ENCODE measurements at regions of chr16 and their contacts with region 1.

Region 1: DNA sequence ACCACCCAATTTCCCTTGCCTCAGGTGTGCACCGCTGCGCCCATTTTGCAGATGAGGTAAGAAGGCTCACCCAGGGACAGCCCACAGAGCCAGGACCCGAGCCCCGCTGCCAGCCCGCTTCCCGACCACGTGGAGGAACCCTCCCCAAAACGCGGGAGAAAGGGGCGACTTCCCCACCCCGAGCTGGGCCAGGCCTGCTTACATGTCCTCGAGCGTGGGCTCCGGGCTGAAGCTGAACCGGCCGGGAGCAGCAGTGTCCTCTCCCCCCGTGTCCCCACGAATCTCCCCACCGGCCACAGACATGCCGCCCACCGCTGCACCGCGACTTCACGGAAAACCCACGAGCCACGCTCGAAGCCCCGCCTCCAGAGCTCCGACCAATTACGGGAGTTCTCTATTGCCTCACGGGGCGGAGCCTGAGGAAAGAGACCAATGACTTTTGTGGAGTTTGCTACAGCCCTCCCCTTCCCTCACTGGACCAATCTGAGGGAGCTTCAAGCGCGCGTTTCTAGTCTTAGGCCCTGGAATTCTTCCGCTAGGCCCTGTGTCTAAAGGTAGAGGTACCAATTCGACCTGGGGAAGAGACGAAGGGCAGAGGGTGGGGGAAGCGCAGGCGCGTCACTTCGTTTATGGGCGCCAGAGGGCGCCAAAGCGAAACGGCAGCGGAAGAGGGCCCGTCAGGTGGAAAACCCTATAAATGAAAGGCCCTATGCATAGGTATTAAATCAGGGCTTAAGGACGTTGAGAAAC is at the start of gene DCTPP1:
- DNase-seq: peak; percentile 99
- ATAC-seq: peak; percentile 99
- H3K4me3 ChIP-seq: peak within 1 kb of the TSS; percentile 86 to 99
- H3K27ac ChIP-seq: peak within 1 kb of the TSS; percentile 91
- H3K4me1 ChIP-seq: peaks cover 9% of the 10 kb centered on the region
- H3K27me3 ChIP-seq: no peaks in the 10 kb centered on the region
- CTCF ChIP-seq: peak; percentile 95
- total RNA-seq, gene DCTPP1: 120 TPM

Region 2: DNA sequence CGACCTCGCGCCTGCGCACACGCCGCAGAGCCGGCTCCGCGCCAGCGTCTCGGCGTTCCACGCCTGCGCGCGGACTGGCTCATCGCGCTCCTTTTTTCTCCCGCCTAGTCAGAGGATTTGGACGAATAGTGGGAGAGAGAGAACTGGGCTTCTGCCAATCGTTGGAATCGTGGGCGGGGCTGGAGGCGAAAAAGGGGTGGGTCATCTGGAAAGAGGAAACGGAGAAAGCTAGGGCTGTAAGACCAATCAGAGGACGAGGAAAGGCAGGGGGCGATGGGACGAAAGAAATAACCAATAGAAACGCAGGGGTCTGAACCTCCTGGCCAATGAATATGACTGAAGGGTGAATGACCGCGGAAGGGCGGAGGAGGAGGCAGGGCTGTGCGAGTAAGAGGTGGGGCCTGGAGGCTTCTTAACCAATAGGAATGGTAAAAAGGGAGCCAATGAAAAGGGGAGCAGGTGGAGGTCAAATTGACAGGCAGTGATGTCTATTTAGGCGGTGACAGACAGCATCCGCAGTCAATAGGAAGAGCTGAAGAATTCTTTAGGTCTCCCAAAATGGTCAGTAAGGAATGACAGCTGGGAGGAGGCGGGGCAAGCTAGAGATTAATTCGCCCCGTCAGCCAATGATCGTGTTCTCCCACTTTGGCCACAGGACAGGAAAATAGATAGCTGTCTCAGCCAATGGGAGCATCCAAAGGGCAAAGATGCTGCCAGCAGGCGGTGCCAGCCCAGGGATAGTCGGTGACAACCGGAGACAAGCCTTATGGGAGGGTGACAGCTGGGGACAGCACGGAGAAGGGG is 59.2 kb before region 1 on chr16 and contains the start of gene TBC1D10B:
- CTCF ChIA-PET with region 1: no interaction called
- POLR2A ChIA-PET with region 1: interaction called, 14 read pairs
- in situ Hi-C with region 1: no loop called
- intact Hi-C with region 1: no loop called
- DNase-seq: peak; percentile 100
- ATAC-seq: peak; percentile 93
- H3K4me3 ChIP-seq: peak within 1 kb of the TSS; percentile 80 to 85
- H3K27ac ChIP-seq: peak within 1 kb of the TSS; percentile 84
- H3K4me1 ChIP-seq: 0 out of 2 replicates have a peak, but pooled peaks cover 7% of the 10 kb centered on the region
- H3K27me3 ChIP-seq: no peaks in the 10 kb centered on the region
- CTCF ChIP-seq: no peak
- total RNA-seq, gene TBC1D10B: 52.6 TPM

Region 3: GRCh38 chr16:30417529-30418349 is 12.1 kb before region 1 on chr16:
- CTCF ChIA-PET with region 1: interaction called, 12 read pairs
- POLR2A ChIA-PET with region 1: interaction called, 3 read pairs
- in situ Hi-C with region 1: no loop called
- intact Hi-C with region 1: no loop called
- DNase-seq: peak; percentile 81
- ATAC-seq: peak; percentile 94
- H3K4me3 ChIP-seq: peak overlapping the region; percentile 45 to 55
- H3K27ac ChIP-seq: peak overlapping the region; percentile 77
- H3K4me1 ChIP-seq: peaks cover 13% of the 10 kb centered on the region
- H3K27me3 ChIP-seq: no peaks in the 10 kb centered on the region
- CTCF ChIP-seq: no peak

Region 4: DNA sequence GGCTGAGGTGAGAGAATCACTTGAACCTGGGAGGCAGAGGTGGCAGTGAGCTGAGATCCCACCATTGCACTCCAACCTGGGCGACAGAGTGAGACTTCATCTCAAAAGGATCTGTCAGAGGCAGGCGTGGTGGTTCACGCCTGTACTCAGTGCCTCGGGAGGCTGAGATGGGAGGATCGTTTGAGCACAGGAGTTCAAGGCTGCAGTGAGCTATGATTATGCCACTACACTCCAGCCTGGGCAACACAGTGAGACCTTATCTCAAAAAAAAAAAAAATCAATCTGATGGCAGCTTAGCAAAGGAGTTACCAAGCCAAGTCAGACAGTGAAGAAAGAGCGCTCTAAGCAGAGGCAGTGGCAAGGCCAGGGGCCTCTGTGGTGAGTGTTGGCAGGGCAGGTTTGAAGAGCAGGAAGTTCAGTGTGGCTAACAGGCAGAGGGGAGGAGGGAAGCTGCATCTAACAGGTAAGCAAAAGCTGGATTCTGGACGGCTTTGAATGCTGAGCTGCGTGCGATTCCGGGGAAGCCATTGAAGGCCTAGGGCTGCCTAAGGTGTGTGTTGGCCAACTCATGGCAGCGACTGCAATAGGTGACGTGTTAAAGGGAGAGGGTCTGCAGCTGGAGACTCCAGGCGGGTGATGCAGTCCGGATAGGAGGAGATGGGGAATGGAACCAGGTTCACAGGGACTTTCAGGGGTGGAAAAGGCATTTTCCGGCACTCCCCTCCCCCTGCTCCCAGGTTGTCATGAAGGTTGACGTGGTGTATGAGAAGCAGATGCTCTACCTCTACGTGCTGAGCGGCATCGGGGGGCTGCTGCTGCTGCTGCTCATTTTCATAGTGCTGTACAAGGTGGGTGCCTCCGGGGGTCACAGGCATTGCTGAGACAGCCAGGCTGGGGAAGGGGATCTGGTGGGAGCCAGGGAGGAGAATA is 89.5 kb after region 1 on chr16:
- CTCF ChIA-PET with region 1: no interaction called
- POLR2A ChIA-PET with region 1: interaction called, 10 read pairs
- in situ Hi-C with region 1: no loop called
- intact Hi-C with region 1: no loop called
- DNase-seq: no peak
- ATAC-seq: no peak
- H3K4me3 ChIP-seq: no peak overlapping the region
- H3K27ac ChIP-seq: no peak overlapping the region
- H3K4me1 ChIP-seq: peaks cover 1% of the 10 kb centered on the region; the same call in 1 of the 2 replicates
- H3K27me3 ChIP-seq: no peaks in the 10 kb centered on the region
- CTCF ChIP-seq: no peak

Region 5: GRCh38 chr16:30602616-30603277 is 172.9 kb after region 1 on chr16:
- CTCF ChIA-PET with region 1: interaction called, 14 read pairs
- POLR2A ChIA-PET with region 1: no interaction called
- in situ Hi-C with region 1: no loop called
- intact Hi-C with region 1: no loop called
- DNase-seq: no peak
- ATAC-seq: no peak
- H3K4me3 ChIP-seq: no peak overlapping the region
- H3K27ac ChIP-seq: no peak overlapping the region
- H3K4me1 ChIP-seq: peaks cover 3% of the 10 kb centered on the region; the same call in 1 of the 2 replicates
- H3K27me3 ChIP-seq: no peaks in the 10 kb centered on the region
- CTCF ChIP-seq: no peak

Region 6: DNA sequence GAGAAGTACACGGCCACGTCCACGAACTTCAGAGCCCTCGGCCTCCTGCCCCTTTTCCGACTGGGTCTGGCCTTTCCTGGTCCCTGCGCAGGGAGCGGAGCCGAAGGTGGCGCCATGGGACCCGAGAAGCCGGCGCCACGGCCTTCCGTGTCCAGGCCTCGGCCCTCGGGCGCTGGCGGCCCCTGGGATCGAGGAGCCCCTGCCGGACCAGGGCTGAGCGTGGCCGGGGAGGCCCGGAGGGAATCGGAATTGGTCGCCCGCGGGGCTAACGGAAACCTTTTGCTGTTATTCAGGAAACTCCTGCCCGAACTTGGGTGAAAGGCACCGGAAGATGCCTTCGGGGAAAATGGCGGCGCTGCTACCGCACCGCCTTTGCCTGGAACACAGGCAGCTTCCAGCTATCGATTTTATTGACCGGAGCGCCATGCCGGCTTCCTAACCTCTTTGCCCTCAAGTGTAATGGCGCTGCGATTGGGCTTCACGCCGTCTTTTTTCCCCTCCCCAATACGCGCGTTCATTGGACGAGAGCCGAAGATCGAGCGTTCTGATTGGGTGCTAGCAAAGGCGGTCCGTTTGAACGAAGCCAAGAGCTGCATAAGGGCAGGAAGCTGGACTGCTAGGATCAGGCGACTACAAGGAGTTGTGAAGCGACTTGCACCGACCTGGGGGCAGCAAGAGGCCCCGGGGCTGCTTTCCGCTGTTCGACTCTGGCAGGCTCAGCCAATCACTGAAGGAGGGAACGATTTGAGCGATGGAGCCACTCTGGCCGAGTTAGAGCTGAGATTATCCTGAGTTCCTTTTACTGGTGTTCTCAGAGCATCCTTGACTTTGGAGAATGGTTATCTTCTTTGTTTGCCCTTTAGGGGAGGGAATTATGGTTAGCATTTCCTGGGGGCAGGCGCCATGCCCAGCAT is 180.3 kb after region 1 on chr16 and contains the start of gene ZNF689:
- CTCF ChIA-PET with region 1: interaction called, 3 read pairs
- POLR2A ChIA-PET with region 1: interaction called, 4 read pairs
- in situ Hi-C with region 1: no loop called
- intact Hi-C with region 1: loop called (anchors 5 kb)
- DNase-seq: peak; percentile 96
- ATAC-seq: peak; percentile 97
- H3K4me3 ChIP-seq: peak within 1 kb of the TSS; percentile 79 to 90
- H3K27ac ChIP-seq: peak within 1 kb of the TSS; percentile 98
- H3K4me1 ChIP-seq: peaks cover 14% of the 10 kb centered on the region
- H3K27me3 ChIP-seq: no peaks in the 10 kb centered on the region
- CTCF ChIP-seq: no peak
- total RNA-seq, gene ZNF689: 16.5 TPM

Region 7: GRCh38 chr16:30628627-30629540 is 199.0 kb after region 1 on chr16:
- CTCF ChIA-PET with region 1: interaction called, 13 read pairs
- POLR2A ChIA-PET with region 1: interaction called, 6 read pairs
- in situ Hi-C with region 1: no loop called
- intact Hi-C with region 1: loop called (anchors 5 kb)
- DNase-seq: peak; percentile 84
- ATAC-seq: peak; percentile 98
- H3K4me3 ChIP-seq: peak overlapping the region; percentile 33 to 61
- H3K27ac ChIP-seq: peak overlapping the region; percentile 76
- H3K4me1 ChIP-seq: peaks cover 5% of the 10 kb centered on the region; the same call in 1 of the 2 replicates
- H3K27me3 ChIP-seq: no peaks in the 10 kb centered on the region
- CTCF ChIP-seq: peak; percentile 95